Dendritic cell treated with granulocyte-macrophage colony-stimulating factor and Interleukin-4, amounts not matched to agents 40 ng/mL and 50 ng/mL, for 4 days (primary cell): ENCODE measurements at regions of chr6 and their contacts with region 1.

Region 1: GRCh38 chr6:105733565-105734162 is 330.8 kb upstream of the PREP start:
- H3K4me3 Mint-ChIP-seq: no peak overlapping the region
- H3K27ac Mint-ChIP-seq: no peak overlapping the region
- H3K4me1 Mint-ChIP-seq: no peaks in the 10 kb centered on the region
- H3K27me3 Mint-ChIP-seq: no peaks in the 10 kb centered on the region

Region 2: GRCh38 chr6:105793130-105793529 is 59.5 kb after region 1 on chr6:
- intact Hi-C with region 1: loop called (anchors 5 kb)
- H3K4me3 Mint-ChIP-seq: no peak overlapping the region
- H3K27ac Mint-ChIP-seq: peak overlapping the region; percentile 51
- H3K4me1 Mint-ChIP-seq: peaks cover 57% of the 10 kb centered on the region
- H3K27me3 Mint-ChIP-seq: no peaks in the 10 kb centered on the region

Region 3: DNA sequence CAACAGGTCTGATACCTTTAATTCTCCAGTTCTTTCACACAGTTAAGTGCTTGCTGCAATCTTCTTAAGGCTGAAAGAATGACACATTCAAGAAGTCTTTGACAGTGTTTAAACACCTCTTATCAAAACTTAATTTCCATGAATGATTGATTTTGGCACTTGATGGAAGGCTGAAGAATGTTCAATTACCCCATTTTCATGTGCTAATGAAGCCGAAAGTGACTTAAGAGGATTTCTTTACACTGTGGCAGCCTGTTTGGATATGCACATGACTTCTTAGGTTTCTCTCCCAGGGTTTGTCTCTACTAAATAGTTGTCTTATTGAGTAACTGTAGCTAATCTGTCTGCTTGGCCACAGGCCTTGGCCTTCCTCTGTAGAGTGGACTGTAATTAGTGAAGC is 271.3 kb after region 1 on chr6:
- intact Hi-C with region 1: loop called (anchors 10 kb)
- H3K4me3 Mint-ChIP-seq: no peak overlapping the region
- H3K27ac Mint-ChIP-seq: no peak overlapping the region
- H3K4me1 Mint-ChIP-seq: peaks cover 6% of the 10 kb centered on the region
- H3K27me3 Mint-ChIP-seq: peaks cover 13% of the 10 kb centered on the region

Region 4: GRCh38 chr6:106223300-106223930 is 489.8 kb after region 1 on chr6:
- intact Hi-C with region 1: loop called (anchors 2 kb)
- H3K4me3 Mint-ChIP-seq: no peak overlapping the region
- H3K27ac Mint-ChIP-seq: no peak overlapping the region
- H3K4me1 Mint-ChIP-seq: peaks cover 24% of the 10 kb centered on the region
- H3K27me3 Mint-ChIP-seq: no peaks in the 10 kb centered on the region